ENCODE measurements at regions of chr5 and their contacts with region 1.

Region 1: DNA sequence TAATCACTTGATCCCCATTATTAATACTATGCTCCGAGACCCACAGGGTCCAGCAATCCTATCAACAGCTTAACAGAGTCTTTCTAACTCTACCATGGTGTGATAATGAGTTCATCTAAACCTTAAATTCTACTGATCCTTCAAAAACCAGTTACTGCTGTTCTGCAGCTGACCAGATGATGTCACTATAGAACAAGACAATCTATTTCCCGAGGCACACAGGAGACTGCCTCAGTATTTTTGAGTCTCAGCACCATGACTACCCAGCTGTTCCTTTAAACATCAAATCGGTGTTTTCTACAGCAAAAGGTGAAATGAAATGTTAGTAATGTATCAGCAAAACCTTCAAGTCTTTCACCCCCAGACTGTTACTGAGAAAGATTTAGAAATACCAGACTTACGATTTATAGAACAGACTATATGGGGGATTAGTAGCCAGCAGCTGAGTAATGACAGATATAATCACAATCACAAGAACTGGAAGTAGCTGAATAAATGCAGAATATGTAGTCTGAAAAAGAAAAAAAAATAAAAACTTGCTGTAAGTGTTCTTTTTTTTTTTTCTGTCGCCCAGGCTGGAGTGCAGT is 16.9 kb downstream of the DNAJC18 start:
- DNase-seq: peak; percentile 73
- ATAC-seq: peak; percentile 92
- H3K4me3 Mint-ChIP-seq: no peak overlapping the region
- H3K27ac Mint-ChIP-seq: peak overlapping the region; percentile 64
- H3K4me1 Mint-ChIP-seq: peaks cover 25% of the 10 kb centered on the region
- H3K27me3 Mint-ChIP-seq: no peaks in the 10 kb centered on the region

Region 2: DNA sequence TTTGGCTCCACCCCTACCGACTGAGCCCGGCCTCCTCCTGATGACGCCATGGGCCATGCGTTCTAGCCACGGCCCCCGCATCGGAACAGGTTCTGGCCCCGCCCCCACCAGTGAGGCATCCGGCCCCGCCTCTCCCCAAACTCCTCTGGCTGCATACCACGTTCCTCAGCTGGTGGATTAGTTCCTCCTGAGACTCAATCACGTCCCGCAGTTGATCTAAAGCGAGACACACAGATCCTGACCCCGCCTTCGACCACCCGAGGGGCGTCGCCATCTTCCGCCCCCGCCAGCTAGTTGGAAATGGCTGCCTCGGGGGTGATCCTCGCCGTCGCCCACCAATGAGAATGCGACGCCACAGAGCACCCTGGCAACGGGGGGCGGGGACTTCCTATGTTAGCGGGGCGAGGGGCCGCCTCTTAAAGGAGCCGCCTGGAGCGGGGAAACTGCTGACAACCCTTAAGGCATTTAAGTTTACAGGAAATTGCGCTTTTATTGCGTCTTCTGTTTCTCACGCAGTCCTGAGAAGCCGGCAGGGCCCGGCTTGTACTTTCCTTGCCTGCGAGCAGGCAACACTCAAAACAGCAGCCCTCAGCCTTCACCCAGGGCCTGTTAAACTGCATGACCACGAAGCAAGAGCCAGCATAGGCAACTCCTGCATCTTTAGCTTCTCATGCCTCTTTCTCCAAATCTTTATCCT is 18.5 kb before region 1 on chr5 and contains the start of gene SPATA24:
- CTCF ChIA-PET with region 1: interaction called, 15 read pairs
- DNase-seq: peak; percentile 99
- ATAC-seq: peak; percentile 95
- H3K4me3 Mint-ChIP-seq: peak within 1 kb of the TSS; percentile 92
- H3K27ac Mint-ChIP-seq: peak within 1 kb of the TSS; percentile 99
- H3K4me1 Mint-ChIP-seq: peaks cover 45% of the 10 kb centered on the region
- H3K27me3 Mint-ChIP-seq: no peaks in the 10 kb centered on the region
- total RNA-seq, gene SPATA24: 5.8 to 6.2 TPM

Region 3: DNA sequence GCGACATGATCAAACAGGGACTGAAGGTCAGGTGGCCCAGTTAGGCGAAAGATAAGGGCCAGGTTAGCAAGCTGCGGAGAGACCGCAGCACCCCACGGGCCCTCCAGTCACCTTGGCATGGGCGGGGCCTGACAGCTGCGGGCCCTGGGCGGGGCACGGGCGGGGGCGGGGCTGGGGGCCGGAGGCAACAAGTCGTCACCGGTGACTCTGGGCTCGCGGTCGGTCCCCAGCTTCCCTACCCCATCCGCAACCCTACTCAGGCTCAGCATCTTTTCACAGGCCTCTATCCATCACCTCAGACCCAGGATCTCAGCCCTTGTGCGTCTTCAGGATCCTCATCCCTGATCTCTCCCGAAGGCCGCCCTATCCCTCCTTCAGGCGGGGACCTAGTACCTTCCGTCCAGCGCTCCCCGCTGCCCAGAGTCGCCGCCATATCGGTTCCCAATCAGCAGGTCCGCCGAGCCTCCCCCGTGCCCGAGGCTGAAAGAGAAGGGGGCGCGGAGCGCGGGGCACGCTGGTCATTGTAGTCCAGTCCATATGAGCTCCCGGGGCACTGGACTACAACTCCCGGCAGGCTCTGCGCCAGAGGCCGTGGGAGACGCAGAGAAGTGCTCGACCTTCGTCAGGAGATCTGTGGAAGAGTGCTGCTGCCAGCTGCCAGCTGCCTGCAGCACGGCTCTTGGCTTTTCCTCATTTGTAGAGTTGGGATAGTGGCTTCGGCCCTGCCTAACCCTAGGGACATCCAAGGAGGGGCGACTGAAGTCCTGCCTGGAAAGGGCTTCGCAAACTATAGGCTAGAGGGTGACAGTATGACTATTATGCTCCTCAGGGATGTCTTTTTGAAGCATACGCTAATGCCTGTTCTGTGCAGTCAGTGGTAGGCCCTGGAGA is 16.9 kb after region 1 on chr5 and contains the start of gene DNAJC18:
- CTCF ChIA-PET with region 1: interaction called, 78 read pairs
- DNase-seq: peak; percentile 94
- ATAC-seq: peak; percentile 89
- H3K4me3 Mint-ChIP-seq: peak within 1 kb of the TSS; percentile 98
- H3K27ac Mint-ChIP-seq: peak within 1 kb of the TSS; percentile 99
- H3K4me1 Mint-ChIP-seq: peaks cover 70% of the 10 kb centered on the region
- H3K27me3 Mint-ChIP-seq: no peaks in the 10 kb centered on the region
- total RNA-seq, gene DNAJC18: 9.2 to 25.7 TPM

Region 4: GRCh38 chr5:139458580-139459406 is 36.4 kb after region 1 on chr5:
- CTCF ChIA-PET with region 1: interaction called, 14 read pairs
- DNase-seq: peak; percentile 96
- ATAC-seq: peak; percentile 86
- H3K4me3 Mint-ChIP-seq: peak overlapping the region; percentile 51
- H3K27ac Mint-ChIP-seq: peak overlapping the region; percentile 86
- H3K4me1 Mint-ChIP-seq: peaks cover 63% of the 10 kb centered on the region
- H3K27me3 Mint-ChIP-seq: no peaks in the 10 kb centered on the region

Region 5: GRCh38 chr5:139482050-139482889 is 59.9 kb after region 1 on chr5 and contains the start of gene STING1:
- CTCF ChIA-PET with region 1: interaction called, 24 read pairs
- DNase-seq: peak; percentile 76
- ATAC-seq: peak; percentile 72
- H3K4me3 Mint-ChIP-seq: peak within 1 kb of the TSS; percentile 89
- H3K27ac Mint-ChIP-seq: peak within 1 kb of the TSS; percentile 98
- H3K4me1 Mint-ChIP-seq: peaks cover 35% of the 10 kb centered on the region
- H3K27me3 Mint-ChIP-seq: no peaks in the 10 kb centered on the region
- total RNA-seq, gene STING1: 103 to 115 TPM